Naive thymus-derived CD4-positive, alpha-beta T cell (primary cell): ENCODE measurements at regions of chr7 and their contacts with region 1.

Region 1: DNA sequence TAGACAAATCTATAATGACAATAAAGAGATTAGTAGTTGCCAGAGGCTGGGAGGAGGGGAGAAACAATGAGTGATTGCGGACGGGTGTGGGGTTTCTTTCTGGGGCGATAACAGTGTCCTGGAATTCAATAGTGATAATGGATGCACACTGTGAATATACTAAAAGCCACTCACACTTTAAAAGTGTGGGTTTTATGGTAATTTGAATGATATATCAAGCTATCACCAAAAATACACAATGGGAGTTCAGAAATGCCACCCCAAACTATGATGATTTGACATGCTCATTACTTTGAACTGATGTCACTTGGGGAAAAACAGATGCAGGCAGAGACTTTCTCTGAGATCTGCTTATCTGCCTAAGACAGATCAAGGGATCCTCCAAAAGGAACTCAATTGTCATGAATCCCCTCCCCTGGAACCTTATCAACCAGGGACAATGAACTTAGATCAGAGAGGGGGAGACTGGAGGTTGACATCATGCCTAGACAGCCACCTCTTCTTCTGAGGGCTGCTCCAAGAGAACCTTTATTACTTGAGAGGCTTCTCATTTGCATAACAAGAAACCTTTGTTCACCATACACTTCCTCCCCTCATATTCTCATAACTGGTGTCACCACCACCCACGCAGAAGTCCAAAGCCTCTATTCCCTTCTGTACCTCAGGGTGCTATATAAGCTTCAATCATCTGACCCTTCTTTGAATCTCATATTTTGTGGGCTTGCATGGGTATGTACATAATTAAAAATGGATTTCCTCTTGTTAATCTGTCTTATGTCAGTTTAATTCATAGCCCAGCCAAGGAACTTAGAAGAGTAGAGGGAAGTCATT is 14.8 kb upstream of the ZC3HAV1 start:
- DNase-seq: no peak
- ATAC-seq: no peak
- H3K4me3 ChIP-seq: no peak overlapping the region
- H3K4me3 Mint-ChIP-seq: peak overlapping the region in 2 of 10 donors; percentile 3 to 31
- H3K27ac ChIP-seq: no peak overlapping the region
- H3K27ac Mint-ChIP-seq: peak overlapping the region in 1 of 9 donors; percentile 43
- H3K4me1 ChIP-seq: peaks cover 1 to 20% of the 10 kb centered on the region in 2 donors
- H3K4me1 Mint-ChIP-seq: peaks cover 7 to 40% (median 25%) of the 10 kb centered on the region in 7 donors
- H3K27me3 ChIP-seq: no peaks in the 10 kb centered on the region
- H3K27me3 Mint-ChIP-seq: peaks cover 0 to 7% (median 0%) of the 10 kb centered on the region in 5 donors

Region 2: DNA sequence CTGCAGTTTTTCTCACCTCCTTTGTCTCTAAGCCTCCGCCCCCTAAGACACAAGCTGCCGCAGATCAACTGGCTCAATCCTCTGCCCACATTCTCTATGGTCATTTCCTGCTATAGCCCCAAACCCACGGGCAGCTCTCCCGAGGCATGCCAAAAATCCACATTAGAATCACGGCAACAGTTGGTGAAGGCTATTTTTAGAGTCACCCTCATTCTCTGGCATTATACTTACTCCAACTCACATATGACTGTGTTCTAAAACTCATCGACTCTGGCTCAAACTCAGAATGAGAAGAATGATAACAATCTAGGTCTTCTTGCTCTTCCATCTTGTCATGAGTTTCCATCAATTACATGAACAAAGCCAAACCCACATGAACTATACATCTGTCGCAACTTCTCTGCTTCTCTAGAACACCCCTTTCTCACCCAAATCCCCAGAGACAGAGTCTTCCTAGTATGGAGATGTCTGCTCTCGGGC is 132.2 kb before region 1 on chr7:
- CTCF ChIA-PET with region 1: no interaction called
- POLR2A ChIA-PET with region 1: no interaction called
- intact Hi-C with region 1: no loop called
- DNase-seq: no peak
- ATAC-seq: no peak
- H3K4me3 ChIP-seq: no peak overlapping the region
- H3K4me3 Mint-ChIP-seq: no peak overlapping the region
- H3K27ac ChIP-seq: no peak overlapping the region
- H3K27ac Mint-ChIP-seq: no peak overlapping the region
- H3K4me1 ChIP-seq: no peaks in the 10 kb centered on the region
- H3K4me1 Mint-ChIP-seq: no peaks in the 10 kb centered on the region
- H3K27me3 ChIP-seq: no peaks in the 10 kb centered on the region
- H3K27me3 Mint-ChIP-seq: peaks cover 17 to 59% (median 25%) of the 10 kb centered on the region in 5 donors

Region 3: GRCh38 chr7:139016931-139017511 is 107.3 kb before region 1 on chr7:
- CTCF ChIA-PET with region 1: interaction called, 74 read pairs
- POLR2A ChIA-PET with region 1: interaction called, 5 read pairs
- intact Hi-C with region 1: loop called (anchors 1 kb)
- DNase-seq: peak; percentile 17 to 76 (median 52)
- ATAC-seq: peak; percentile 94
- H3K4me3 ChIP-seq: no peak overlapping the region
- H3K4me3 Mint-ChIP-seq: no peak overlapping the region
- H3K27ac ChIP-seq: no peak overlapping the region
- H3K27ac Mint-ChIP-seq: peak overlapping the region in 1 of 9 donors; percentile 52
- H3K4me1 ChIP-seq: no peaks in the 10 kb centered on the region
- H3K4me1 Mint-ChIP-seq: peaks cover 0 to 10% (median 6%) of the 10 kb centered on the region in 7 donors
- H3K27me3 ChIP-seq: no peaks in the 10 kb centered on the region
- H3K27me3 Mint-ChIP-seq: peaks cover 0 to 16% (median 5%) of the 10 kb centered on the region in 5 donors

Region 4: GRCh38 chr7:139058943-139059342 is 65.4 kb before region 1 on chr7:
- CTCF ChIA-PET with region 1: interaction called, 10 read pairs
- POLR2A ChIA-PET with region 1: interaction called, 4 read pairs
- intact Hi-C with region 1: no loop called
- DNase-seq: no peak
- ATAC-seq: no peak
- H3K4me3 ChIP-seq: no peak overlapping the region
- H3K4me3 Mint-ChIP-seq: peak overlapping the region in 1 of 10 donors; percentile 16
- H3K27ac ChIP-seq: peak overlapping the region; percentile 22
- H3K27ac Mint-ChIP-seq: peak overlapping the region in 8 of 9 donors; percentile 38 to 91 (median 79)
- H3K4me1 ChIP-seq: peaks cover 0 to 16% of the 10 kb centered on the region in 2 donors
- H3K4me1 Mint-ChIP-seq: peaks cover 28 to 63% (median 49%) of the 10 kb centered on the region in 7 donors
- H3K27me3 ChIP-seq: no peaks in the 10 kb centered on the region
- H3K27me3 Mint-ChIP-seq: no peaks in the 10 kb centered on the region

Region 5: DNA sequence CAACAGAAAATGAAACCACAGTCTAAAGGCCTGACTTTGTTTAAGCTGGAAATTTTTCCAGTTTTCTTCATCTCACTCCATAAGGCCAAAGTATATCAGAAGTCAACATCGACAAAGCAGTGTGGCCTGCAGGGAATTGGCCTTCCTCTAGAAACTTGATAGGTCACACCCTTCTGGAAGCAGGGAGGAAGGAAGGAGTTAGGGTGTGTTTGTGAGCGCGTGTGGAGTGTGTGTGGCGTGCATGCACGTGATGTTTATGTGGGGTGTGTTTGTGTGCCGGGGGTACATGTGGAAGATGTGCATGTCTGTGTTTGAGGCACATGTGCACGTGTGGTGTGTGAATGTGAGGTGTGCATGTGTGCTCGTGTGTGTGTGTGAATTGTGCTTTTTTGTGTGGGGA is 43.4 kb before region 1 on chr7:
- CTCF ChIA-PET with region 1: interaction called, 18 read pairs
- POLR2A ChIA-PET with region 1: interaction called, 6 read pairs
- intact Hi-C with region 1: loop called in 1 of 2 experiments (anchors 1 kb)
- DNase-seq: no peak
- ATAC-seq: peak; percentile 17
- H3K4me3 ChIP-seq: no peak overlapping the region
- H3K4me3 Mint-ChIP-seq: peak overlapping the region; percentile 51 to 98 (median 74)
- H3K27ac ChIP-seq: peak overlapping the region; percentile 56
- H3K27ac Mint-ChIP-seq: peak overlapping the region; percentile 60 to 94 (median 87)
- H3K4me1 ChIP-seq: peaks cover 34 to 75% of the 10 kb centered on the region in 2 donors
- H3K4me1 Mint-ChIP-seq: peaks cover 49 to 98% (median 92%) of the 10 kb centered on the region in 7 donors
- H3K27me3 ChIP-seq: no peaks in the 10 kb centered on the region
- H3K27me3 Mint-ChIP-seq: no peaks in the 10 kb centered on the region

Region 6: GRCh38 chr7:139109188-139109982 is 14.9 kb before region 1 on chr7 and contains the start of gene ZC3HAV1:
- CTCF ChIA-PET with region 1: interaction called, 14 read pairs
- POLR2A ChIA-PET with region 1: interaction called, 13 read pairs
- intact Hi-C with region 1: loop called in 1 of 2 experiments (anchors 1 kb)
- DNase-seq: peak; percentile 68 to 94 (median 90)
- ATAC-seq: peak; percentile 91
- H3K4me3 ChIP-seq: peak within 1 kb of the TSS; percentile 80
- H3K4me3 Mint-ChIP-seq: peak within 1 kb of the TSS; percentile 92 to 100 (median 98)
- H3K27ac ChIP-seq: peak within 1 kb of the TSS; percentile 93
- H3K27ac Mint-ChIP-seq: peak within 1 kb of the TSS; percentile 96 to 100 (median 98)
- H3K4me1 ChIP-seq: peaks cover 13 to 22% of the 10 kb centered on the region in 2 donors
- H3K4me1 Mint-ChIP-seq: peaks cover 24 to 49% (median 42%) of the 10 kb centered on the region in 7 donors
- H3K27me3 ChIP-seq: no peaks in the 10 kb centered on the region
- H3K27me3 Mint-ChIP-seq: no peaks in the 10 kb centered on the region
- total RNA-seq, gene ZC3HAV1: 129 to 181 (median 152) TPM